WTC11 (cell line): ENCODE measurements at regions of chr7 and their contacts with region 1.

Region 1: DNA sequence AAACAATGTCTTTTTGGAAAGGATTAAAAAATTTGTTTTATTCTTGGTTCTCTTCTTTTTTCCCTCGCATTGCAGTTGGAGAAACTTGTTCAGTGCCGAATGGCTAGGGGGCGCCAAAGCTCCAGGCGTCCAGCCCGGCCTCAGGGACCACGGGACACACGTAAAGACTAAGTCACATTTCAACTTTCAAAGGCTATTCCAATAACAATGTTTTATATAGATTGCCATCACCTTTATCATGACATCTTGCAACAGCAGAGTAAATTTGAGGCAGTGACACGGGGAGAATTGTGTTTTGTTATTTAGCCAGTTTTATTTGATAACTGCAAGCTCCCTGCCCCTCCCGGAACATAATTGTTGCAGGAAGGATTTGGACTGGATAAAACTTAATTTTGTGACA is 2.2 kb upstream of the IGFBP3 start:
- DNase-seq: peak; percentile 83
- ATAC-seq: no peak
- H3K4me3 Mint-ChIP-seq: peak overlapping the region; percentile 74
- H3K27ac Mint-ChIP-seq: no peak overlapping the region
- H3K4me1 Mint-ChIP-seq: peaks cover 44% of the 10 kb centered on the region
- H3K27me3 Mint-ChIP-seq: peaks cover 57% of the 10 kb centered on the region
- CTCF ChIP-seq: peak; percentile 89

Region 2: GRCh38 chr7:45574521-45575500 is 348.5 kb before region 1 on chr7:
- CTCF ChIA-PET with region 1: no interaction called
- POLR2A ChIA-PET with region 1: no interaction called
- DNase-seq: peak; percentile 61
- ATAC-seq: peak; percentile 43
- H3K4me3 Mint-ChIP-seq: peak overlapping the region; percentile 81
- H3K27ac Mint-ChIP-seq: no peak overlapping the region
- H3K4me1 Mint-ChIP-seq: peaks cover 50% of the 10 kb centered on the region
- H3K27me3 Mint-ChIP-seq: peaks cover 48% of the 10 kb centered on the region
- CTCF ChIP-seq: no peak

Region 3: GRCh38 chr7:45863715-45864114 is 59.6 kb before region 1 on chr7:
- CTCF ChIA-PET with region 1: interaction called, 23 read pairs
- POLR2A ChIA-PET with region 1: no interaction called
- DNase-seq: peak; percentile 69
- ATAC-seq: peak; percentile 94
- H3K4me3 Mint-ChIP-seq: no peak overlapping the region
- H3K27ac Mint-ChIP-seq: no peak overlapping the region
- H3K4me1 Mint-ChIP-seq: no peaks in the 10 kb centered on the region
- H3K27me3 Mint-ChIP-seq: no peaks in the 10 kb centered on the region; the same call in 1 of the 2 replicates
- CTCF ChIP-seq: no peak

Region 4: DNA sequence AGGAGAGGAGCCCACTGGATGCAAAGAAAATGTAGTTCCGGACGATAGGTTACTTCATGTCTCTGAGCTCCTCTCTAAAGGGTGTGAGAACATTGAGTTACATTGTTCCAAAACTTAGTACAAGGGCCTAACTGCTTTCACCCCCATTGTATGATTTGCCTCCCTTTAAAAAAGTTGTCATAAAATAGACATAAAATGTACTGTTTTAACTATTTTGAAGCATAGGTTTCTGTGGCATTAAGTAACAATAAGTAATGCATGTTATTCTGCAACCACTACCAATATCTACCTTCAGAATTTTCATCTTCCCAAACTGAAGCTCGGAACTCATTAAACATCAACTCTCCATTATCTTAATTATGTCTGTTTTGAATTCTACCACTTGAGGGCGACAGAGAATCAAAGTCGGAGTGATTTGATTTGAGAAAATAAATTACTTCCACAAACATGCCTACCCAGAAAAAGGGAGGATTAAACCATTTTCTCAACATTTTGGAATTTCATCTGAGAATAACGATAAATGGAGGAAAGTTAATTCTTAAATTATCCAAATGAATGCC is 32.3 kb before region 1 on chr7:
- CTCF ChIA-PET with region 1: interaction called, 12 read pairs
- POLR2A ChIA-PET with region 1: no interaction called
- DNase-seq: no peak
- ATAC-seq: no peak
- H3K4me3 Mint-ChIP-seq: no peak overlapping the region
- H3K27ac Mint-ChIP-seq: no peak overlapping the region
- H3K4me1 Mint-ChIP-seq: peaks cover 16% of the 10 kb centered on the region
- H3K27me3 Mint-ChIP-seq: peaks cover 51% of the 10 kb centered on the region
- CTCF ChIP-seq: peak; percentile 29; the same call in 1 of the 2 replicates

Region 5: GRCh38 chr7:45978010-45978681 is 54.9 kb after region 1 on chr7:
- CTCF ChIA-PET with region 1: no interaction called
- POLR2A ChIA-PET with region 1: no interaction called
- DNase-seq: no peak
- ATAC-seq: peak; percentile 68
- H3K4me3 Mint-ChIP-seq: no peak overlapping the region
- H3K27ac Mint-ChIP-seq: 0 out of 2 replicates have a peak overlapping the region, but pooled peaks have one; percentile 54
- H3K4me1 Mint-ChIP-seq: peaks cover 23% of the 10 kb centered on the region
- H3K27me3 Mint-ChIP-seq: no peaks in the 10 kb centered on the region; the same call in 1 of the 2 replicates
- CTCF ChIP-seq: no peak

Region 6: GRCh38 chr7:46015107-46015868 is 92.0 kb after region 1 on chr7:
- CTCF ChIA-PET with region 1: interaction called, 15 read pairs
- POLR2A ChIA-PET with region 1: no interaction called
- DNase-seq: peak; percentile 90
- ATAC-seq: peak; percentile 95
- H3K4me3 Mint-ChIP-seq: peak overlapping the region; percentile 50
- H3K27ac Mint-ChIP-seq: peak overlapping the region; percentile 87
- H3K4me1 Mint-ChIP-seq: peaks cover 33% of the 10 kb centered on the region
- H3K27me3 Mint-ChIP-seq: no peaks in the 10 kb centered on the region; the same call in 1 of the 2 replicates
- CTCF ChIP-seq: no peak

Region 7: GRCh38 chr7:46352004-46352954 is 429.0 kb after region 1 on chr7:
- CTCF ChIA-PET with region 1: interaction called, 59 read pairs
- POLR2A ChIA-PET with region 1: interaction called, 3 read pairs
- DNase-seq: peak; percentile 66
- ATAC-seq: peak; percentile 83
- H3K4me3 Mint-ChIP-seq: no peak overlapping the region
- H3K27ac Mint-ChIP-seq: no peak overlapping the region
- H3K4me1 Mint-ChIP-seq: peaks cover 4% of the 10 kb centered on the region
- H3K27me3 Mint-ChIP-seq: no peaks in the 10 kb centered on the region
- CTCF ChIP-seq: peak; percentile 36